Posterior cingulate gyrus (tissue), 11 donors: ENCODE measurements at regions of chr19 and their contacts with region 1.

Region 1: GRCh38 chr19:17075035-17075863 is at the starts of genes HAUS8 and MYO9B:
- DNase-seq: peak; percentile 99 to 100 (median 100)

Region 2: GRCh38 chr19:17125715-17126677 is 50.7 kb after region 1 on chr19:
- intact Hi-C with region 1: loop called (anchors 5 kb)
- DNase-seq: peak in 7 of 10 donors; percentile 19 to 91 (median 65)

Region 3: DNA sequence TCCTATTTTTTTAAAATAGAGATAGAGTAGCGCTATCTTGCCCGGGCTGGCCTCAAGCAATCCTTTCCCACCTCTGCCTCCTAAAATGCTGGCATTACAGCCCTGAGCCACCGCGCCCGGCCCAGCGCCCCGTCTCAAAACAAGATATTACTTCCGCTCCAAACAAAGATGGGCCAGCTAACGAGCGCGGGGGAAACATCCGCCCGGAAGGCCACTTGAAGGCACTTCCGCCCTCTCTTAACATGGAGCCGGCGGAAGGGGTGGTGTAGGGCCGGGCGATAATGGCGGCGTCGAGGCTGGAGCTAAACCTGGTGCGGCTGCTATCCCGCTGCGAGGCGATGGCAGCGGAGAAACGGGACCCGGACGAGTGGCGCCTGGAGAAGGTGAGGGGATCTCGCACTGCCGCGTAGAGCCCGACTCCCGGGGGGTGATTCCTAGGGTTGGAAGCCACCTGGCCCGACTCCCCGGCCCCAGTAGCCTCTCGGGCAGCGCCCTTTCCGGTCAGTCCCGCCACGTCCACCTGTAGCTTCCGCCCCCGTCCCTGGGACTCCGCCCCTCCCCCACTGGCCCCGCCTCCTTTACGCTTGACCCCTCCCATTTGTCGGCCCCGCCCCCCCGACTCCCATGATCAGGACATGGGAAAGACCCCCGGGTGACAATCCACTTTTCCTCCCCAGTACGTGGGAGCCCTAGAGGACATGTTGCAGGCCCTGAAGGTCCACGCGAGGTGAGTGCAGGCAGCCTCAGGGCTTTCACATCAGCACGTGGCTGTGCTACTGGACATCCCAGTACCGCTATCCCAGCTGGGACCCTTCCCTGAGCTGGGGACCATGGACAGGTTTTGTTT is 140.1 kb after region 1 on chr19 and contains the start of gene USE1:
- intact Hi-C with region 1: loop called (anchors 10 kb)
- DNase-seq: peak; percentile 82 to 98 (median 88)